ENCODE measurements at regions of chr4 and their contacts with region 1.

Region 1: GRCh38 chr4:144174401-144175067 is 34.0 kb upstream of the GYPA start:
- DNase-seq: peak; percentile 36
- CTCF ChIP-seq: peak; percentile 48

Region 2: DNA sequence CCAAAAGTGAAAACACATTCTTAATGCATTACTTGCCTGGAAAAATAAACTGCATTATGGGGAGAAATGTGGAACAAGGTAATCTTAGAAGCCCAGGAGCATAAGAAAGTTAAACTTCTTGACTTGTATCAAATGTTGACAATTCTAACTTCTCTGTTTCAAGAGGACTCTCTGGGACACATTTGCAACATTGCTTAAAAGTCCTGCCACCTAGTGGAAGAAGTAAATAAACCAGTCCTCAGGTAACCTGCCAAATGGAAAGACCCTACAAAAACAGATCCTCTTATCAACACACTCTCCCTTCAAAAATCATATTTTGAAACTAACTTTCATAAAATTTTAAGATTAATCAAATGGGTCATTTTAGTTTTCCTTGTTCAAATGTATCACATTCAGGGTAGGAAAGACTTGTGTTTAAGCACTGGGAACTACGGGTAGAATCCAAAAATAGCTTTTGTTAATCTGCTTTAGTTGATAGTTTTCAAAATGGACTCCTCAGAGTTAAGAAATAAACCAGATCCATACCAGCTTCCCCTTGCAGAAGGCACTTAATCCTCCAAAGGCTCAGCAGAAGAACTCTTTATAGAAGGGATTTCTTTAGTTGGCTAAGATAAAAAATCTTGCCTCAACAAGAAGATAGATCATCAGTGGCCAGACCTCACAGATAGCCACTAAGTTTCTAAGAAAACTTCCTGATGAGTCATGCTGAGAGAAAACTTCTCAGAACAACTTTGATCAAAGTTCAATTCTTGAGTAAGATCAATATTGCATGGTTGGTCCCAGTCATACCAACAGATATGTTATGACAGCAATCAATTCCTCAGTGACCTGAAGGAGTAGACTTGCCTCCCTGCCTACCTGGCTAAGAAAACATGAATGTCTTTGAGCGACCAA is 613.1 kb after region 1 on chr4:
- in situ Hi-C with region 1: loop called (anchors 25 kb)
- DNase-seq: peak; percentile 33
- CTCF ChIP-seq: peak; percentile 59

Measured in GM13977 (cell line).